Activated CD8-positive, alpha-beta T cell treated with anti-CD3 and anti-CD28 coated beads for 36 hours (primary cell): ENCODE measurements at regions of chrX and their contacts with region 1.

Region 1: DNA sequence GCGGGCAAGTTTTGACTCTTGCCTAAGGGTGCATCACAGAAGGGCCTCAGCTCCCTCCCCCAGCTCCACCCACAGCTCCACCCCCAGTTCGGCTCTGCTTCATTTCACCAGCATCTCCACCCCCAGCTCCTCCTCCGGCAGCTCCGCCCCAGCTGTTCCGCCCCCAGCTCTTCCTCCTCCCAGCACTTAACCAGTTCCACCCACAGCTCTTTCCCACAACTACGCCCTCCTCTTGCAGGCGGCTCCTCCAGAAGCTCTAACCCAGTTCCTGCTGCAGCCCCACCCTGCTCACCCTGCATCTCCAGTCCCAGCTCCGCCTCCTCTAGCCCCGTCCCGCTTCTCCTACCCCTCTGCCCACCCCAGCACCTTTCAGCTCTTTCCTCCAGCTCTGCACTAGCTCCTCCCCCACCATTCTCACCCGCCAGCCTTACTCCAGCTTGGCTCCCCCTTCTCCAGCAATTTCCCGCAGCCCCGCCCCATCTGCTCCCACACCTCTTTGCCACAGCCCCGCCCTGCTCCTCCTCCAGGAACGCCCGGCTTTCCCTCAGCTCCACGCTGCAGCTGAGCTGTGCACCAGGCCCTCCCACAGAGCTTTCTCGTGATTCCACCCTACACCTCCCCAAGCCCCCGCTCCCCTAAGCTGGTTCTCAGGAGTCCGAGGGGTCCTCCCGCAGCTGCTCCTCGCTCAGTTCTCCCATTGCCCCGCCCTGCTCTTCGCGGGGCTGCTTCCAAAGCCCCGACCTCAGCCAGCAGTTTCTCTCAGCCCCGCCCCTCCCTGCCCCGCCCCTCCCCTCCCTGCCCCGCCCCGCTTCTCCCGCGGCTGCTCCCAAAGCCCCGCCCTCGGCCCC is 1.3 kb upstream of the EOLA1 start:
- DNase-seq: peak; percentile 92
- ATAC-seq: peak; percentile 55
- H3K4me3 Mint-ChIP-seq: peak overlapping the region; percentile 82
- H3K27ac Mint-ChIP-seq: peak overlapping the region; percentile 85
- H3K4me1 Mint-ChIP-seq: peaks cover 8% of the 10 kb centered on the region
- H3K27me3 Mint-ChIP-seq: no peaks in the 10 kb centered on the region
- CTCF ChIP-seq: no peak

Region 2: GRCh38 chrX:149497626-149498025 is 41.9 kb before region 1 on chrX:
- CTCF ChIA-PET with region 1: no interaction called
- POLR2A ChIA-PET with region 1: no interaction called
- intact Hi-C with region 1: no loop called
- DNase-seq: no peak
- ATAC-seq: no peak
- H3K4me3 Mint-ChIP-seq: no peak overlapping the region
- H3K27ac Mint-ChIP-seq: no peak overlapping the region
- H3K4me1 Mint-ChIP-seq: peaks cover 26% of the 10 kb centered on the region
- H3K27me3 Mint-ChIP-seq: no peaks in the 10 kb centered on the region
- CTCF ChIP-seq: no peak

Region 3: GRCh38 chrX:149512225-149512885 is 27.2 kb before region 1 on chrX:
- CTCF ChIA-PET with region 1: interaction called, 22 read pairs
- POLR2A ChIA-PET with region 1: interaction called, 3 read pairs
- intact Hi-C with region 1: no loop called
- DNase-seq: peak; percentile 69
- ATAC-seq: peak; percentile 71
- H3K4me3 Mint-ChIP-seq: no peak overlapping the region
- H3K27ac Mint-ChIP-seq: peak overlapping the region; percentile 78
- H3K4me1 Mint-ChIP-seq: peaks cover 46% of the 10 kb centered on the region
- H3K27me3 Mint-ChIP-seq: no peaks in the 10 kb centered on the region
- CTCF ChIP-seq: peak; percentile 53

Region 4: GRCh38 chrX:149938427-149939270 is 399.1 kb after region 1 on chrX and contains the start of gene EOLA2:
- CTCF ChIA-PET with region 1: interaction called, 4 read pairs
- POLR2A ChIA-PET with region 1: no interaction called
- intact Hi-C with region 1: loop called (anchors 10 kb)
- DNase-seq: peak; percentile 96
- ATAC-seq: peak; percentile 51
- H3K4me3 Mint-ChIP-seq: peak within 1 kb of the TSS; percentile 83
- H3K27ac Mint-ChIP-seq: peak within 1 kb of the TSS; percentile 97
- H3K4me1 Mint-ChIP-seq: no peaks in the 10 kb centered on the region
- H3K27me3 Mint-ChIP-seq: no peaks in the 10 kb centered on the region
- CTCF ChIP-seq: peak; percentile 16
- total RNA-seq, gene EOLA2: 23.2 to 25.8 TPM